Activated CD8-positive, alpha-beta memory T cell treated with anti-CD3 and anti-CD28 coated beads, Interleukin-2, amount 10 ng/mL, durations not matched to agents 7 days and 5 days (primary cell): ENCODE measurements at regions of chr7 and their contacts with region 1.

Region 1: DNA sequence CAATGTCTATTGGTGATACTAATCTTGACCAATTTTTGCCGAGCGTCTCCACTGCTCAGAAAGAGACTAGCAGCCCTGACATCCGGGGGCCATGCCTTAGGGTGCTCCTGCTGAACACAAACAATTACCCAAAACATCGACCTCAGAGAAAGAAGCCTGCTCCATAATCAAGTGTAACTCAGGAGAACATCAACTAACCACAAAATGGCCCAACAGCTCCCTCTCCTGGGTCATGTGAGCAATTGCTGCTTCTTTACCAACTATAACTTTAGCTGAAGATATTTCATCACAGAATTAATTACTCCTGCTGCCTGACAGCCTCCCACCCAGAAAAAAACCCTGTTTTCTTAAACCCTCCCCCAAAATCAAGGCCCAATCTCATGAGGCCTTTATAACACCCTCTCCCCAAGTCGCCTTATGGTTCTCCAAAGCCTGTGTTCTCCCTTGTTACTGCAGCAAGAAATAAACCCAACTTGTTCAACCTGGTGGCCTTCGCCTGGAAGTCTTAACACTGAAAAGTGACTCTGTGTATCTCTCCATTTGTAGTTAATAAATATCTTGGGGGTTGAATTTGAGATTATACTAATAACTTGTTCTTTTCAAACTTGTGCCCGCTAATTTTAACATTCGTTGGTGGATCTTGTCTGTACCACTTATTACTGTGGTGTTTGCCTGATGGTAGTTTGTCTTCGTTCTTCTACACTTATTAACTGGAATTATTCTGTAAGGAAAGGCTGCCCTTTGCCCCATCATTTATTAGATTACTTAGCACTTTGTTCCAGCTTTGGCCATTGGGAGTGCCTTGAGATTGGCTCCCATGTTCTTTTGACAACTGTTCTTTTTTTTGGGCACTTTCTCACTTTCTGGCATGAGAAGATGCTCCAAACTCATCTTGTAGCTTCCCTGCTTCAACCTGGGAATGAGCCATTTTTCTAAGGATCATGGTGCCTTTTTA is 21.2 kb upstream of the RAMP3 start:
- DNase-seq: peak; percentile 78
- ATAC-seq: peak; percentile 87
- H3K4me3 Mint-ChIP-seq: no peak overlapping the region
- H3K27ac Mint-ChIP-seq: no peak overlapping the region
- H3K4me1 Mint-ChIP-seq: peaks cover 28% of the 10 kb centered on the region
- H3K27me3 Mint-ChIP-seq: peaks cover 8% of the 10 kb centered on the region

Region 2: GRCh38 chr7:44811086-44811485 is 325.3 kb before region 1 on chr7:
- CTCF ChIA-PET with region 1: no interaction called
- DNase-seq: no peak
- ATAC-seq: no peak
- H3K4me3 Mint-ChIP-seq: no peak overlapping the region
- H3K27ac Mint-ChIP-seq: no peak overlapping the region
- H3K4me1 Mint-ChIP-seq: peaks cover 4% of the 10 kb centered on the region
- H3K27me3 Mint-ChIP-seq: no peaks in the 10 kb centered on the region

Region 3: GRCh38 chr7:44858161-44858560 is 278.2 kb before region 1 on chr7:
- CTCF ChIA-PET with region 1: interaction called, 43 read pairs
- DNase-seq: no peak
- ATAC-seq: no peak
- H3K4me3 Mint-ChIP-seq: no peak overlapping the region
- H3K27ac Mint-ChIP-seq: no peak overlapping the region
- H3K4me1 Mint-ChIP-seq: peaks cover 16% of the 10 kb centered on the region
- H3K27me3 Mint-ChIP-seq: peaks cover 10% of the 10 kb centered on the region

Region 4: GRCh38 chr7:44973610-44974401 is 162.6 kb before region 1 on chr7:
- CTCF ChIA-PET with region 1: interaction called, 56 read pairs
- DNase-seq: peak; percentile 71
- ATAC-seq: no peak
- H3K4me3 Mint-ChIP-seq: no peak overlapping the region
- H3K27ac Mint-ChIP-seq: peak overlapping the region; percentile 26
- H3K4me1 Mint-ChIP-seq: peaks cover 47% of the 10 kb centered on the region
- H3K27me3 Mint-ChIP-seq: no peaks in the 10 kb centered on the region

Region 5: GRCh38 chr7:44980393-44981034 is 155.9 kb before region 1 on chr7:
- CTCF ChIA-PET with region 1: interaction called, 11 read pairs
- DNase-seq: peak; percentile 91
- ATAC-seq: peak; percentile 22
- H3K4me3 Mint-ChIP-seq: peak overlapping the region; percentile 99
- H3K27ac Mint-ChIP-seq: peak overlapping the region; percentile 95
- H3K4me1 Mint-ChIP-seq: peaks cover 71% of the 10 kb centered on the region
- H3K27me3 Mint-ChIP-seq: no peaks in the 10 kb centered on the region

Region 6: GRCh38 chr7:45020915-45021314 is 115.5 kb before region 1 on chr7:
- CTCF ChIA-PET with region 1: no interaction called
- DNase-seq: no peak
- ATAC-seq: no peak
- H3K4me3 Mint-ChIP-seq: no peak overlapping the region
- H3K27ac Mint-ChIP-seq: peak overlapping the region; percentile 26
- H3K4me1 Mint-ChIP-seq: peaks cover 36% of the 10 kb centered on the region
- H3K27me3 Mint-ChIP-seq: no peaks in the 10 kb centered on the region

Region 7: DNA sequence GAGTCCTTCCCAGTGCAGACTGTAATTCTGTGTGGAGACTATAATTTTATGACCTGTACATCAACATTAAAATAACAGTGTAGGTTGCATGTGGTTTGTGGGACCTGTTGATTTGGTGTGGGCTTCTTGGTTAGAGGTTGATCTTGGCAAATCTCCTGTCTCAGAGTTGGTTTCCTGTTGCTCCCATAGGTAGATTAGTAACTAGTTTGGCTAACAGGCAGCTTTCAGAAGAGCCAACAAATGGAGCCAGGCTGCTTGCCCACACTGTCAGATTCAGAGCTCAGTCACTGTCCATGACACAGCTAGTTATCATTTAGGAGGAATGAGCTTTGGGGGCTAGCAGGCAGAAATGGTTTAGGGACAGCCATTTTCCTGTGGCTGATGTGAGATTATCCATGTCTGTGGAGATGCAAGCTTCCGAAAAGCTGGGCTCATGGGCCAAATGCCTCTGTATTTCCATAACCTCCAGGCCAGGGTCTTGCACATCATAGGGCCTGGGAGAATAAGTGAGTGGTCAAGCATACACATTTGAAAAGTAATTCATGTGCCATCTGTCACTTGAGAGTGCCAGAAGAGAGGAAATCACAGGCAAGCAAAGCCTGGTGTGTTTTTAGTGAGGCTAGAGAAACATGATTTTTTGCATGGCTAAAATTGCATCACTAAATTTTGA is 103.0 kb before region 1 on chr7:
- CTCF ChIA-PET with region 1: interaction called, 13 read pairs
- DNase-seq: peak; percentile 66
- ATAC-seq: peak; percentile 41
- H3K4me3 Mint-ChIP-seq: peak overlapping the region; percentile 55
- H3K27ac Mint-ChIP-seq: peak overlapping the region; percentile 78
- H3K4me1 Mint-ChIP-seq: peaks cover 81% of the 10 kb centered on the region
- H3K27me3 Mint-ChIP-seq: no peaks in the 10 kb centered on the region

Region 8: DNA sequence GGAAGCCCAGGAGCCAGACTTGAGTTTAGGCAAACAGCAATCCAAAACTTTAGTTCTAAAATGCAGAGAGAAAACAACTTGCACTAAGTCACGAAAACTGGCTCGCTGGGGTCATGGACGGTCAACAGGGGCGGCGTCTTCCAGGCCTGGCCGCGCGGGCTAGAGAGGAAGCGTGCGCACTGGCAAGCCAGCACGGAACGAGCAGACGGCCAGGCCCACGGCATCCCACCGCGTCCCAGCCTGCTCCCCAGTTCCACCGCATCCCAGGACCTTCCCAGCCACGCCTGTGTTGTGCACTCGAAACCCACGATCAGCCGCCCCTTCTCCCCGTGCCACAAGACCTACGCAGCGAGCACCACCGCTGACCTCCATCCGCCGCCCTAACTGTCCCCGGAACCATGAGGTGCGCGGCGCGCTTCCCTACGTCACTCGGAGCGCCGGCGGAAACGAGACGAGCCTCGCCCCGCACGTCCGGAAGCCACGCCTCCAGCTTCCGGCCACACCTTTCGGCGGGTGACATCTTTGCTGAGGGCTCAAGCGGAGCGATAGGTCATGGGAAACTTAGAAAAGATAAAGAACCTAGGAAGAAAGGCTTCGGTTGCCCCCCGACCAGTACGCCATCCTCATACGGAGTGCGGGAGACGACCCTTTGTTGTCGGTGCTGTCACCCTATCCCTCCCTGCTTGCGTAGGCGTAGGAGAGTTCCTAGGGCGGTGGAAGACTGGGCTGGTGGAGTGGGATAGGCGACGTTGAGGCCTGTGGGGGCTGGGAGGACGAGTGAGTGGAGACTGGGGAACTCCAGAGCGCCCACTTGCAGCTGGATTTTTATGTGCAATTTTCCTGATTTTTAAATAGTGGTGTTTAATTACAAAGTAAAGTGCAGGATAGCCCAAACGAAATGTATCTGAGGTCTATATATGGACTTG is 24.8 kb before region 1 on chr7 and contains the start of gene TBRG4:
- CTCF ChIA-PET with region 1: interaction called, 26 read pairs
- DNase-seq: peak; percentile 96
- ATAC-seq: peak; percentile 92
- H3K4me3 Mint-ChIP-seq: peak within 1 kb of the TSS; percentile 87
- H3K27ac Mint-ChIP-seq: peak within 1 kb of the TSS; percentile 89
- H3K4me1 Mint-ChIP-seq: peaks cover 41% of the 10 kb centered on the region
- H3K27me3 Mint-ChIP-seq: peaks cover 9% of the 10 kb centered on the region
- total RNA-seq, gene TBRG4: 121 to 152 TPM

Region 9: DNA sequence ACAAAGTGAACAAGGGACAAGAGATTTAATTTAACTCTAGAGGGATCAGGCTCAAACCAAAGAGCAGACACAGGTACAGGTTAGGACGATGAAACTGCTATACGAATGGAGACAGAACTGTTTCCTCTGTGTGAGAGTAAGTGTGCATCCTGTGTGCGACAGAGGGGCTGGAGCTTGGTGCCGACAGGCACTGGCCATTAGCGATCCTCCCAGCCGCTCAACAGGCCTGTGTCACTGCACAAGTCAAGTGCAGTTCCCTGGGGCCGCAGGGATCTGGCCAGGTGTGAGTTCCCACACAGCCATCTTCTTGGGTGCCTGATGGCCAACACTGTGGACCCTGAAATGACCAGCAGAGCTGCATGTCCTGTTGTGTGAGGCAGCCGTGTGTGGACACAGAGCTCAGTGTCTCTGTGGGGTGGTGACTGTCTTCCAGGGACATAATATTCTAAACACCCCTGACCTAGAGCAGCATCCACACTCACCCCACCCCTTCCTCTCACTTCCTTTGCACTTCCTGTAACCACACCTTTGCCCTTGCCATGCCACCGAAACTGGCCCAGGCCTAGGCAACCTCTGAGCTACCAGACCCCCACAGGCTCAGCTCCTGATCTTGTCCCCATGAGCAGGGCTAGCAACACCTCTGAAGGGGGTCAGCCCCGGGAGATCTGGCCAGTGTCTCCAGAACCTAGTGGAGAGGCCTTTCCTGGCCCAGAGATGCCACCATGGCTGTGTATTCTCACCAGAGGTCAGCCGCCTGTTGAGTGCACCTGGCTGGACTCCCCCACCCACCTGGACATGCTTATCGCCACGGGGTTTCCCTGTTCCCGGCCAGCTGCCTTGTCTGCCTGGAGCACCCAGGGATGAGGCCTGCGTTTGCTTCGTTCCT is 13.2 kb before region 1 on chr7:
- CTCF ChIA-PET with region 1: interaction called, 28 read pairs
- DNase-seq: no peak
- ATAC-seq: peak; percentile 60
- H3K4me3 Mint-ChIP-seq: no peak overlapping the region
- H3K27ac Mint-ChIP-seq: peak overlapping the region; percentile 87
- H3K4me1 Mint-ChIP-seq: peaks cover 13% of the 10 kb centered on the region
- H3K27me3 Mint-ChIP-seq: no peaks in the 10 kb centered on the region

Region 10: GRCh38 chr7:45171946-45172345 is 35.6 kb after region 1 on chr7:
- CTCF ChIA-PET with region 1: no interaction called
- DNase-seq: no peak
- ATAC-seq: no peak
- H3K4me3 Mint-ChIP-seq: no peak overlapping the region
- H3K27ac Mint-ChIP-seq: no peak overlapping the region
- H3K4me1 Mint-ChIP-seq: no peaks in the 10 kb centered on the region
- H3K27me3 Mint-ChIP-seq: peaks cover 20% of the 10 kb centered on the region